Cardiac septum (tissue), 1 donor: ENCODE measurements at regions of chr2 and their contacts with region 1.

Region 1: GRCh38 chr2:8285081-8285480 is 396.8 kb upstream of the ID2 start:
- DNase-seq: no peak

Region 2: GRCh38 chr2:7984693-7985353 is 300.3 kb before region 1 on chr2:
- intact Hi-C with region 1: no loop called
- DNase-seq: no peak

Region 3: DNA sequence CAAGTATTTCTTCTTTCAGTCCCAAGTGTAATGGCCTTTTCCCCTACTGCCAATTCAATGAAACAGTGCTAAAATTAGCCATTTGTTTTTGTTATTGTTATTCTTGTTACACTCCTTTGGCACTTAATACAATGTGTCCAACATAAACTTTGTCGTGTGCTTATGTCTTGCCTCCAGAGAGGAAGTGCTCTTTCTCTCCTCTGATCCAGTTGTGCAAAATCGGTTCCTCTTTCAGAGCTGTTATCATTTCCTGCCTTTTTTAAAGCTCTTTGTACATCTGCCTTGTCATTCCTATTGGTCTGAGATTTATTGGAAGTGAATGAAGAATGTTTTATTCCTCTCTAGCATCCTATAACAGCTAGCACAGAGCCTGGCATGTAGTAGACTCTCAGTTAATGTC is 226.4 kb before region 1 on chr2:
- intact Hi-C with region 1: loop called (anchors 5 kb)
- DNase-seq: no peak

Region 4: GRCh38 chr2:8303322-8303832 is 18.3 kb after region 1 on chr2:
- intact Hi-C with region 1: no loop called
- DNase-seq: no peak